Activated naive CD4-positive, alpha-beta T cell treated with anti-CD3 and anti-CD28 coated beads, Interleukin-2, amount 10 ng/mL, durations not matched to agents 7 days and 5 days (primary cell): ENCODE measurements at regions of chr5 and their contacts with region 1.

Region 1: GRCh38 chr5:109688971-109689739 is 572 bp upstream of the MAN2A1 start:
- DNase-seq: peak; percentile 83
- H3K4me3 Mint-ChIP-seq: peak overlapping the region; percentile 88
- H3K27ac Mint-ChIP-seq: peak overlapping the region; percentile 96
- H3K4me1 Mint-ChIP-seq: peaks cover 40% of the 10 kb centered on the region
- H3K27me3 Mint-ChIP-seq: no peaks in the 10 kb centered on the region

Region 2: GRCh38 chr5:109676920-109677319 is 12.2 kb before region 1 on chr5:
- CTCF ChIA-PET with region 1: interaction called, 19 read pairs
- DNase-seq: no peak
- H3K4me3 Mint-ChIP-seq: no peak overlapping the region
- H3K27ac Mint-ChIP-seq: no peak overlapping the region
- H3K4me1 Mint-ChIP-seq: no peaks in the 10 kb centered on the region
- H3K27me3 Mint-ChIP-seq: peaks cover 19% of the 10 kb centered on the region

Region 3: GRCh38 chr5:109718216-109718615 is 29.1 kb after region 1 on chr5:
- CTCF ChIA-PET with region 1: no interaction called
- DNase-seq: no peak
- H3K4me3 Mint-ChIP-seq: no peak overlapping the region
- H3K27ac Mint-ChIP-seq: no peak overlapping the region
- H3K4me1 Mint-ChIP-seq: no peaks in the 10 kb centered on the region
- H3K27me3 Mint-ChIP-seq: no peaks in the 10 kb centered on the region

Region 4: DNA sequence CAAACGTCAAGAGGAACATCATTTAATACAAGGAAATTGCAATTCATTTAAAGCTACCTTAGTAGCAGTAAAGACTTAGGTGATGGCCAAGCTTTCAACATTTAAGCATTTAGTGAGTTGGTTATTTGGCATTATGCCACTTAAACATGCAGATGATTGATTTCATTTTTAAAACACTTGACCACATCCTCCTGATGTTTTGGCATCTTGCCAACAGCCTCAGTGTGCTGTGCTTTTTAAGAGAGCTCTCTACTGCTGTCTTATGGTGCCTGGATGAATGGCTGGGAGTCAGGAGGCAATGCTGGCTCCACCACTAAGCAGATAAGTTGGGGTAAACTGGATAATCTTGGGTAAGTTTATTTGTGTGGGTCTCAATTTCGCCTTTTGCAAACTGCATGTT is 365.1 kb after region 1 on chr5:
- CTCF ChIA-PET with region 1: interaction called, 14 read pairs
- DNase-seq: peak; percentile 85
- H3K4me3 Mint-ChIP-seq: peak overlapping the region; percentile 45
- H3K27ac Mint-ChIP-seq: peak overlapping the region; percentile 92
- H3K4me1 Mint-ChIP-seq: peaks cover 39% of the 10 kb centered on the region
- H3K27me3 Mint-ChIP-seq: no peaks in the 10 kb centered on the region